ENCODE measurements at regions of chr2 and their contacts with region 1.

Region 1: GRCh38 chr2:26244309-26245121 is at the starts of genes HADHA and HADHB:
- DNase-seq: peak; percentile 89 to 92 (median 90)
- H3K4me3 ChIP-seq: peak within 1 kb of the TSS; percentile 95
- H3K27ac ChIP-seq: peak within 1 kb of the TSS; percentile 72 to 97
- H3K4me1 ChIP-seq: peaks cover 15% of the 10 kb centered on the region
- H3K27me3 ChIP-seq: no peaks in the 10 kb centered on the region
- CTCF ChIP-seq: peak in 1 of 3 donors; percentile 27
- EP300 ChIP-seq: no peak
- POLR2A ChIP-seq: peak; percentile 69
- total RNA-seq, gene HADHA: 85.2 to 167 (median 129) TPM
- total RNA-seq, gene HADHB: 81.1 to 124 (median 104) TPM

Region 2: DNA sequence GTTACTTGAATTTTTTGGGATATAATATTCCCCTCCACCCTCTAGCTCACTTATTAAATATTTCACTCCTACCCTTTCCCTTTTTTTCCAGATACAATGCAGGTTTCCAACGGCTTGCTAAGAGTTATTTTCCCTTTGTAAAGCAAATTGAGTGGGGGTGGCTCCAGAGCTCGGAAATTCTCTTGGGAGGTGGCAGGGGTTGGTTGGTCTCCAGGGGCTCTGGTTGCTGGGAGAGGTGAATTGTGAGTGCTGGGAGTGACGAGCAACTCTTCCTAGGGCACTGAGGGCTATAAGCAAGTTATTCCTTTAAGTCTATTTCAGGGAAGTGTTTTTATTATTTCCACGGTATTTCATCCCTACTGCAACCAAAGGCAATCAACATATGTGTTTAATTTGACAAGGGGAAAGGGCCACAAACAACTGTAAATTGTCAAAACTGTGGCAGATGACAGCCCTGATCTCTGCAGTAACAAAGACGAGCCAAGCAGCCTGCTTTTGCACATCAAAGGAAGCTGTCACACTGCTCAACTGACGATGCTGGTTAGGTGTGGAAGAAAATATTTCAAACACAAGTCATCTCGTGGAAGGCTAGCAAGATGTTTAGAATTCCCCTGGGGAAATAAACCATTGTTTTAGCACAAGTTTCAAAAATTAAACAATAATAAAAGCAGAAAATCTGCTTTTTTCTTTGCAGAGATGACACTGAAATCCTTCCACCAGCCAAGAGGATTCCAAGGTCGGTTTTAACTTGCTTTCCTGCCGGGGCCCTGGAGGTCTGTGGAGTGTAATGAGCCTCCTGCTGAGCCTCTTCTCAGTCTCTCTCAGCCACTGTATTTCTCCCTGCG is 331.4 kb before region 1 on chr2:
- intact Hi-C with region 1: no loop called
- DNase-seq: no peak
- H3K4me3 ChIP-seq: no peak overlapping the region
- H3K27ac ChIP-seq: no peak overlapping the region
- H3K4me1 ChIP-seq: no peaks in the 10 kb centered on the region
- H3K27me3 ChIP-seq: no peaks in the 10 kb centered on the region
- CTCF ChIP-seq: no peak
- EP300 ChIP-seq: no peak
- POLR2A ChIP-seq: no peak

Region 3: DNA sequence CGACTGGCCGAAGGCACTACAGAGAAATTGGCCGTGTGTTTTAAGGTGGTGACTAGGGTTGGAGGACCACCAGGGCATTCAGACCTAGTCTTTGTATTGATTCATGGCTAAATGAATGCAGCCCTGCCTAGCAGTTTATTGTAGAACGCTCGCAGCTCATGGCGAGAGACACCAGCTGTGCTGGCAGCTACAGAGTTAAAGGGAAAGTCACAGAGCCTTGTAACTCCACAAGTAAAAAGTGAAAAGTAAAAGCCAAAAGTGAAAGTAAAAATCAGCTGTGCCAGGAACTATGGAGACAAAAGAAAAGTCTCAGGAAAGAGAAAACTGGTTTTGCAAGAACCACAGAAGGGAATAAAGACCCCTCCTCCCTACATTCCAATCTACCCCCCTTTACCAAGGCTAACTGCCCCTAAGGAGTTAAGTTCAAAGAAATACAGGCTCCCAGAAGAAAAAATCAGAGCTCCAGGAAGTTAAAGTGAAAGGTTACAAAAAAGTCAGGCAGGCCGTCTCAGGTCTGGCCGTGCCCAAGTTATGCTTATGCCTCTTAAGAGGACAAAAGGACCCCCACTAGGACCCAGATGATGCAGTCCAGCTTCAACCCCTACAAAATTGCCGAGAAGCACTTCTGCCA is 55.1 kb after region 1 on chr2:
- intact Hi-C with region 1: loop called in 1 of 4 experiments (anchors 5 kb)
- DNase-seq: peak in 3 of 5 donors; percentile 46 to 48 (median 47)
- H3K4me3 ChIP-seq: peak overlapping the region; percentile 52
- H3K27ac ChIP-seq: peak overlapping the region; percentile 92
- H3K4me1 ChIP-seq: peaks cover 9% of the 10 kb centered on the region
- H3K27me3 ChIP-seq: no peaks in the 10 kb centered on the region
- CTCF ChIP-seq: no peak
- EP300 ChIP-seq: no peak
- POLR2A ChIP-seq: no peak

Region 4: GRCh38 chr2:26327291-26328272 is 83.1 kb after region 1 on chr2:
- intact Hi-C with region 1: loop called in 1 of 4 experiments (anchors 5 kb)
- DNase-seq: no peak
- H3K4me3 ChIP-seq: no peak overlapping the region
- H3K27ac ChIP-seq: no peak overlapping the region
- H3K4me1 ChIP-seq: no peaks in the 10 kb centered on the region
- H3K27me3 ChIP-seq: no peaks in the 10 kb centered on the region
- CTCF ChIP-seq: no peak
- EP300 ChIP-seq: no peak
- POLR2A ChIP-seq: no peak